Left colon (tissue), 2 donors: ENCODE measurements at regions of chr5 and their contacts with region 1.

Region 1: DNA sequence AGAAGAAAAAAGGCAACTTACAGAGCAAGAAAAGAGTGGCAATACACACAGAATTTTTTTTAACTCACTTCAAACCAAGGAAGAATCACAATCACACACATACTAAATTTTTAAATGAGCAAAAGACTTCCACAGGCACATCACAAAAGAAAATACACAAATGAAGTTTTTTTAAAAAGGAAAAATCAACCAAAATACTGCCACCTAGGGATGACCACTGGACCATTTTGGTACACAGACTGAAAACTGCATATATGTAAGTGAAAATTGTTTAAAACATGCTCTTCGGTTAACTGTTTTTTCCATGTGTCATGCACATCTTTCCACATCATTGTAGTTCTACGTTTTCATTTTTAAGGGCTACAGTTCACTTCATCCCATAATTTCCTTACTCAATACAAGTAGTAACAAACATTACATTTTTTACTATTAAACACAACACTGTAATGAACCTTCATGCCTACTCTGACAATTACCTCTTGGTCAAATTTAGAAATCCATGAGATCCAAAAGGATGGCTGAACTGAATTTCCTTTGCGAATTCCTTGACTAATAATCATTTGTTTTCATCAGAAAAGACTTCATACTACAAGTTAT is 79.0 kb downstream of the FBXW11 start:
- DNase-seq: no peak
- ATAC-seq: no peak

Region 2: DNA sequence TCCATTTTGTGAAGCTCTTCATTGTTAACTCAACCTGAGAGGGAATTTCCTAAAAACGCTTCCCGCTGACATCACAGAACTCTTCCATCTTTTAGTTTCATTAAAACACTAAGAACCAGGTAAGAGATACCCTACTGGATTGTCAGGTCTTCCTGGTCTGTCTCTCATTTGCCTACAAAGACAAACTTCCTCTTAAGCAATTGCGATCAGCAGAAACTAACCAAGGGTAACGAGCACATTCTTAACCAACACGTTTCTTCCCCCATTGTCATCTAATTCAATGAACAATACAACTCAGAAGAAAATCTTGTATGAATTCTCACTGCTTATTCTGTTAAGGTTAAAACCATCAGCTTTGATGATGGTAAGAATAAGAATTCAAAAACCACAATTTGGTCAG is 72.4 kb after region 1 on chr5:
- intact Hi-C with region 1: loop called in 1 of 2 experiments (anchors 10 kb)
- DNase-seq: no peak
- ATAC-seq: no peak